SK-N-SH (cell line): ENCODE measurements at regions of chr9 and their contacts with region 1.

Region 1: DNA sequence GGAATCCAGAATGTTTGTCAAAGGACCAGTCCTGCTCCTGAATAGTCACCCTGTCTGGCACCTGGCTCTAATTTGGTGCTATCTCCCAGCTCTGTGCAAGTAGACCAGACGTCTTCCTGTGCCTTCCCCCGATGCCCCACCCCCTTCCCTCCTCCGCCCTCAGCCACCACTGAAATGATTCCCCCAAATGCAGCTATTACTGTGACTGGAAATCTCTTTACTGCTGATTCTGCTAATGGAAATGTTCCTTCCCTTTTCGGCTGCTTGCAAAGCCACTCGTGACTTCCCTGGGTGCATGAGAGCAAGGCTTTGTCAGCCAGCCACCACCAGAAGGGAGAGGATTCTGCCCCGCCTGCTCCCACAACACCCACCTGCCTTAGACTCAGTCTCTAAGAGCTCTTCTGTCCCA is 11.4 kb downstream of the ASTN2 start:
- DNase-seq: peak; percentile 70
- H3K4me3 ChIP-seq: peak overlapping the region in 1 of 2 experiments; percentile 19; a peak in 1 of 4 replicates
- H3K27ac ChIP-seq: peak overlapping the region in 1 of 2 experiments; percentile 100; a peak in 2 of 4 replicates
- H3K4me1 ChIP-seq: peaks cover 0 to 72% of the 10 kb centered on the region in 2 experiments; a peak in 2 of 4 replicates
- H3K27me3 ChIP-seq: no peaks in the 10 kb centered on the region
- CTCF ChIP-seq: no peak
- EP300 ChIP-seq: peak in 1 of 2 experiments; percentile 65; a peak in 1 of 4 replicates
- RAD21 ChIP-seq: peak; percentile 3

Region 2: DNA sequence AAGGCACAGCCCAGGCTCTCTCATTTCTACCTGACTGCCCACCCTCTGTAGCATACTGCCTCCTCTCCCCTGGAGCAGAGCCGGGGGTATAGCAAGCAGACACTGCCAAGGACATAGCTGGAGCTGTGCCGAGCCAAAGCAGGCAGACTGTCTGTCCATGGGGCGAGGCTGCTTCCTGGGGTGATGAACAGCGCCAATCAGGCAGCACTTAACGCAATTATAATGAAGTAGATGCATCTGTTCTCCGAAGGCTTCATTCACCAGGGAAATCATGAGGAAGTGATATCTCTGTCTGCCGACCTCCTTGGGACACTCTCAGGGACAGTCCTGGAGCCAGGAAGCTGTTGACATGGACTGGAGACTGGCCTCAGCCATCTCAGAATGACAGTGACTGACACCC is 219.2 kb before region 1 on chr9:
- CTCF ChIA-PET with region 1: interaction called, 10 read pairs
- POLR2A ChIA-PET with region 1: interaction called, 6 read pairs
- DNase-seq: peak; percentile 71
- H3K4me3 ChIP-seq: no peak overlapping the region
- H3K27ac ChIP-seq: peak overlapping the region in 1 of 2 experiments; percentile 97; a peak in 2 of 4 replicates
- H3K4me1 ChIP-seq: peaks cover 0 to 38% of the 10 kb centered on the region in 2 experiments; a peak in 2 of 4 replicates
- H3K27me3 ChIP-seq: no peaks in the 10 kb centered on the region
- CTCF ChIP-seq: no peak
- EP300 ChIP-seq: peak in 1 of 2 experiments; percentile 83; a peak in 2 of 4 replicates
- RAD21 ChIP-seq: peak; percentile 47

Region 3: DNA sequence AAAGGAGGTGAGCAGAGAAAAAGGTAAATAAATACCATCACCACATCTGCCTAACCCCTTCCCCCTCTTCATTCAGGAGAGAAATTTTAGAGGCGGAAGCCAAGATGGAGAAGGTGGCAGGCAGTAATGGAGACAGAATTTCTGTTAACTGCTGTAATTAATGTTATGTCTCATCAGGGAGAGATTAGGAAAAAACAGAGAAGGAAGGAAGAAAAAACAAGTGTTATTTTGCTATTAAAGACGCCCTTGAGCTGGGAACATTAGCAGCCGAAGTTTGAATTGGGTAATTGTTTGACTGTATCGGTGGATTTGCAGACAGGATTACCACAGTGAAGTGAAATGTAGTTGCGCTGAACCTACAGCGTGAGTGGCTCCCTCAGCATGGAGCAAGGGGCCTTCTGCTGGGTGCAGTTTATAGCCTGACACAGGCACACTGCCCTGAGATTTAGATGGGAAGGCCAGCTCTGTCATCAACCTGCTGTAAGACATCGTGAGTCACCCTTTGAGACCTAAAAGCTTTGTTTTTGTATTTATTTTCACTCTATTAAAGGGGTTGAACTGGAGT is 124.9 kb before region 1 on chr9:
- CTCF ChIA-PET with region 1: interaction called, 5 read pairs
- POLR2A ChIA-PET with region 1: interaction called, 19 read pairs
- DNase-seq: peak; percentile 28
- H3K4me3 ChIP-seq: no peak overlapping the region; a peak in 1 of 4 replicates
- H3K27ac ChIP-seq: peak overlapping the region; percentile 30 to 98; a peak in 3 of 4 replicates
- H3K4me1 ChIP-seq: peaks cover 0 to 33% of the 10 kb centered on the region in 2 experiments; a peak in 2 of 4 replicates
- H3K27me3 ChIP-seq: no peaks in the 10 kb centered on the region
- CTCF ChIP-seq: no peak
- EP300 ChIP-seq: no peak
- RAD21 ChIP-seq: peak; percentile 28

Region 4: GRCh38 chr9:117354244-117354847 is 49.1 kb before region 1 on chr9:
- CTCF ChIA-PET with region 1: interaction called, 3 read pairs
- POLR2A ChIA-PET with region 1: interaction called, 18 read pairs
- DNase-seq: no peak
- H3K4me3 ChIP-seq: no peak overlapping the region
- H3K27ac ChIP-seq: peak overlapping the region in 1 of 2 experiments; percentile 97; a peak in 2 of 4 replicates
- H3K4me1 ChIP-seq: peaks cover 0 to 19% of the 10 kb centered on the region in 2 experiments; a peak in 2 of 4 replicates
- H3K27me3 ChIP-seq: no peaks in the 10 kb centered on the region
- CTCF ChIP-seq: no peak
- EP300 ChIP-seq: no peak
- RAD21 ChIP-seq: peak; percentile 61